ENCODE measurements at regions of chr18 and their contacts with region 1.

Region 1: GRCh38 chr18:34707670-34708069 is 2.4 kb upstream of the DTNA start:
- DNase-seq: peak; percentile 63
- H3K4me3 ChIP-seq: no peak overlapping the region
- CTCF ChIP-seq: no peak

Region 2: DNA sequence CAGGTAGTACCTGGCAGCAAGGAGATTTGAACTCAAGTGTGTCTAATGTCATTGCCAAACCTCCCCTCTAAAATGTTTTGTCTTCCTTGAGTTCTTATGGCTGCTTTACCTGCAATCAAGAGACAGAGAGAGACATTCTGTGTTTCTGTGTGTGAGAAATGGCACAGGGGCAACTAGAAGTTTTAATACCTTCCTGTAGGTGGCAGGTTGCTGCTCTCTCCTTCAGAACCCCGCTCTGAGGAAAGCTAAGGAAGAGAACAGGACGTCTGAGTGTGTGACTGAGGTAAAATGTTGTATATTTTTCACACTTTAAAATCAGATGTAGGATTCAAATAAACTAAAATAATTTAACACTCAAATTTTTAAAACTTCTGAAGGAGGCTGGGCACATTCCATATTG is 21.6 kb after region 1 on chr18:
- CTCF ChIA-PET with region 1: interaction called, 19 read pairs
- POLR2A ChIA-PET with region 1: no interaction called
- DNase-seq: no peak
- H3K4me3 ChIP-seq: no peak overlapping the region
- CTCF ChIP-seq: peak; percentile 48